ENCODE measurements at regions of chr3 and their contacts with region 1.

Region 1: GRCh38 chr3:10192953-10193691 is 28.4 kb downstream of the IRAK2 start:
- DNase-seq: peak; percentile 16 to 79 (median 62)
- ATAC-seq: peak; percentile 32
- H3K4me3 ChIP-seq: peak overlapping the region in 1 of 2 experiments; percentile 40
- H3K4me3 Mint-ChIP-seq: peak overlapping the region; percentile 80
- H3K27ac ChIP-seq: peak overlapping the region in 1 of 2 experiments; percentile 92
- H3K27ac Mint-ChIP-seq: peak overlapping the region; percentile 99
- H3K4me1 ChIP-seq: peaks cover 83% of the 10 kb centered on the region
- H3K4me1 Mint-ChIP-seq: peaks cover 79% of the 10 kb centered on the region
- H3K27me3 ChIP-seq: no peaks in the 10 kb centered on the region
- H3K27me3 Mint-ChIP-seq: no peaks in the 10 kb centered on the region
- CTCF ChIP-seq: no peak

Region 2: GRCh38 chr3:9396700-9397521 is 796.2 kb before region 1 on chr3:
- CTCF ChIA-PET with region 1: no interaction called
- POLR2A ChIA-PET with region 1: no interaction called
- intact Hi-C with region 1: no loop called
- DNase-seq: peak; percentile 98 to 100 (median 99)
- ATAC-seq: peak; percentile 67
- H3K4me3 ChIP-seq: peak overlapping the region; percentile 68 to 73
- H3K4me3 Mint-ChIP-seq: peak overlapping the region; percentile 94
- H3K27ac ChIP-seq: peak overlapping the region; percentile 90 to 97
- H3K27ac Mint-ChIP-seq: peak overlapping the region; percentile 97
- H3K4me1 ChIP-seq: peaks cover 69% of the 10 kb centered on the region
- H3K4me1 Mint-ChIP-seq: peaks cover 72% of the 10 kb centered on the region
- H3K27me3 ChIP-seq: no peaks in the 10 kb centered on the region
- H3K27me3 Mint-ChIP-seq: no peaks in the 10 kb centered on the region
- CTCF ChIP-seq: no peak

Region 3: DNA sequence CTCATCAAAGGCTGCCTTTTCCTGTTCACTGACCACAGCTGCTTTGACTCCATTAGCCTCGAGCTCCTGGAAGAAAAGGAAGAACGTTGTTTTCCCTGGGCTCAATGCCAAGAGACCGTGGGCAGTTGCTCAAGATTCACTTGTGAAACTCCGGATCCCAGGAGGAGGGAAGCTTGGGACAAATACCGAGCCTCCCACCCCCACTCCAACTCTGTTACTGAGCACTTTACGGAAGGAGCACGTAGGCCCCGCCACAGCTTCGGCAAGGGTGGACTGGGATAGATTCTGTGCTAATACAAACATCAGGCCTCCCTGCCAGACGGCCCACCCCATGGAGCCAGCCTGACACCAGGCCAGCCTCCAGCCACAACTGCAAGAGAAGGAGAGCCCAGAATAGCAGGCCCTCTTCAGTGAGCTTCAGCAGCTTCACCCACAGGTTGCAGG is 177.6 kb before region 1 on chr3:
- CTCF ChIA-PET with region 1: no interaction called
- POLR2A ChIA-PET with region 1: no interaction called
- intact Hi-C with region 1: no loop called
- DNase-seq: no peak
- ATAC-seq: no peak
- H3K4me3 ChIP-seq: no peak overlapping the region
- H3K4me3 Mint-ChIP-seq: no peak overlapping the region
- H3K27ac ChIP-seq: no peak overlapping the region
- H3K27ac Mint-ChIP-seq: no peak overlapping the region
- H3K4me1 ChIP-seq: peaks cover 10% of the 10 kb centered on the region
- H3K4me1 Mint-ChIP-seq: peaks cover 4% of the 10 kb centered on the region
- H3K27me3 ChIP-seq: no peaks in the 10 kb centered on the region
- H3K27me3 Mint-ChIP-seq: peaks cover 5% of the 10 kb centered on the region
- CTCF ChIP-seq: no peak

Region 4: GRCh38 chr3:10142707-10143566 is 50.2 kb before region 1 on chr3:
- CTCF ChIA-PET with region 1: interaction called, 4 read pairs
- POLR2A ChIA-PET with region 1: interaction called, 11 read pairs
- intact Hi-C with region 1: loop called in 1 of 2 experiments (anchors 2 kb)
- DNase-seq: peak in 3 of 9 experiments; percentile 22 to 51 (median 33)
- ATAC-seq: no peak
- H3K4me3 ChIP-seq: peak overlapping the region; percentile 73 to 74
- H3K4me3 Mint-ChIP-seq: peak overlapping the region; percentile 93
- H3K27ac ChIP-seq: peak overlapping the region in 1 of 2 experiments; percentile 54
- H3K27ac Mint-ChIP-seq: peak overlapping the region; percentile 98
- H3K4me1 ChIP-seq: peaks cover 32% of the 10 kb centered on the region
- H3K4me1 Mint-ChIP-seq: peaks cover 32% of the 10 kb centered on the region
- H3K27me3 ChIP-seq: no peaks in the 10 kb centered on the region
- H3K27me3 Mint-ChIP-seq: no peaks in the 10 kb centered on the region
- CTCF ChIP-seq: no peak

Region 5: DNA sequence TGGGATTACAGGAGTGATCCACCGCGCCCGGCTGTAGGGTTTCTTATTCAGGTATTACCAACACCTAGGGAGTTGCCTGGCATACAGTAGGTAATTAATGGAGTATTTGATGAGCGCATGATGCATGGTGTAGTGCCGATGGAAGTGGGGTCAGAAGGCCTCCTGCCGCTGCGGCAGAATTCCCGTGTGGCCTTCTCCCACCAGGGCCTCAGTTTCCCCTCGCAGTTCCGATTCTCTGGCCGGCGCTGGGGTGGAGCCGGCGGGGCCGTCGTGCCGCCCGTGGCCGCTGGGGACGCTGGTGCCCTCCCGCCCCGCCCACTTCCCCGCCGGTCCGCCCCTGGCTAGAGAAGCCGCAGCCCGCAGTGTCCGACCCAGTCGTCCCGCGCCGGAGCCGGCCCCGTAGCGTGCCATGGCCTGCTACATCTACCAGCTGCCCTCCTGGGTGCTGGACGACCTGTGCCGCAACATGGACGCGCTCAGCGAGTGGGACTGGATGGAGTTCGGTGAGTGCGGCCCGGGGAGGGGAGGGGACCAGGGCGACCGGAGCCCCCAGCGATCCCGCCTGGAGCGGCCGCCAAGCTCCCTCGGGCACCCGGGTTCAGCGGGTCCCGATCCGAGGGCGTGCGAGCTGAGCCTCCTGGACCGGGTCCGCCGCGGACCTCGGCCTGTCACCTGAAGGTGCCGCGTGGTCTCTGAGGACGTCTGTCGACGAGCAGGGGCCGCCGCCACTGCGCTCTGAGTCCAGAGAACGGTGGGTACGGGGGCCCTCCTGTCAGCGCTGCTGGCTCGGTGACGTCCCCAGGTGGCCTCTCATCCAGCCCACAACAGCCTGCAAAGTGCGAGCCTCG is 28.4 kb before region 1 on chr3 and contains the start of gene IRAK2:
- CTCF ChIA-PET with region 1: interaction called, 12 read pairs
- POLR2A ChIA-PET with region 1: interaction called, 7 read pairs
- intact Hi-C with region 1: loop called (anchors 1 to 2 kb)
- DNase-seq: peak; percentile 18 to 77 (median 52)
- ATAC-seq: peak; percentile 87
- H3K4me3 ChIP-seq: peak within 1 kb of the TSS; percentile 90 to 91
- H3K4me3 Mint-ChIP-seq: peak within 1 kb of the TSS; percentile 82
- H3K27ac ChIP-seq: peak within 1 kb of the TSS; percentile 48 to 59
- H3K27ac Mint-ChIP-seq: peak within 1 kb of the TSS; percentile 52
- H3K4me1 ChIP-seq: peaks cover 16% of the 10 kb centered on the region
- H3K4me1 Mint-ChIP-seq: peaks cover 19% of the 10 kb centered on the region
- H3K27me3 ChIP-seq: no peaks in the 10 kb centered on the region
- H3K27me3 Mint-ChIP-seq: no peaks in the 10 kb centered on the region
- CTCF ChIP-seq: peak; percentile 97
- total RNA-seq, gene IRAK2: 1.6 to 1.7 TPM

Region 6: DNA sequence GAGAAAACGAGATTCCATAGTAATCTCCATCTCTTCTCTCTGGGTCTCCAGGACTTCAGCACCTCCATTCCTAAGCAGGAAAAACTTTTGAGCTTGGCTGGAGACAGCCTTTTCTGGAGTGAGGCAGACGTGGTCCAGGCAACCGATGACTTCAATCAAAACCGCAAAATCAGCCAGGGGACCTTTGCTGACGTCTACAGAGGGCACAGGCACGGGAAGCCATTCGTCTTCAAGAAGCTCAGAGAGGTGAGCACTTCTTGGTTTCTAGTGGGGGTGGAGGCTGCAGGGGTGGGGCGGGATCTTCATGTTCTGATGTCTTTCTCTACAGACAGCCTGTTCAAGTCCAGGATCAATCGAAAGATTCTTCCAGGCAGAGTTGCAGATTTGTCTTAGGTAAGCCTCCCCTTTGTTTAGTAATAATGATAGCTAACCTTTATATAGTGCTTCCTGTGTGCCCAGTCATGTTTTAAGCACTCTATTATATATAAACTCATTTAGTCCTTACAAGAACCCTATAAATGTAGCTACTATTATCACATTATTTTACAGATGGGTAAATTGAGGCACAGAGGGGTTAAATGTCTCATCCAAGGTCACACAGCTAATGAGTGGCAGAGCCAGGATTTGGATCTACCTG is 20.2 kb after region 1 on chr3:
- CTCF ChIA-PET with region 1: interaction called, 7 read pairs
- POLR2A ChIA-PET with region 1: interaction called, 5 read pairs
- intact Hi-C with region 1: loop called in 1 of 2 experiments (anchors 2 kb)
- DNase-seq: no peak
- ATAC-seq: no peak
- H3K4me3 ChIP-seq: no peak overlapping the region
- H3K4me3 Mint-ChIP-seq: no peak overlapping the region
- H3K27ac ChIP-seq: no peak overlapping the region
- H3K27ac Mint-ChIP-seq: no peak overlapping the region
- H3K4me1 ChIP-seq: no peaks in the 10 kb centered on the region
- H3K4me1 Mint-ChIP-seq: no peaks in the 10 kb centered on the region
- H3K27me3 ChIP-seq: no peaks in the 10 kb centered on the region
- H3K27me3 Mint-ChIP-seq: no peaks in the 10 kb centered on the region
- CTCF ChIP-seq: no peak

Region 7: GRCh38 chr3:10224784-10225665 is 31.9 kb after region 1 on chr3:
- CTCF ChIA-PET with region 1: interaction called, 15 read pairs
- POLR2A ChIA-PET with region 1: interaction called, 18 read pairs
- intact Hi-C with region 1: loop called (anchors 1 to 5 kb)
- DNase-seq: peak; percentile 34 to 81 (median 65)
- ATAC-seq: peak; percentile 70
- H3K4me3 ChIP-seq: no peak overlapping the region
- H3K4me3 Mint-ChIP-seq: peak overlapping the region; percentile 7
- H3K27ac ChIP-seq: peak overlapping the region in 1 of 2 experiments; percentile 30
- H3K27ac Mint-ChIP-seq: peak overlapping the region; percentile 75
- H3K4me1 ChIP-seq: peaks cover 24% of the 10 kb centered on the region
- H3K4me1 Mint-ChIP-seq: peaks cover 51% of the 10 kb centered on the region
- H3K27me3 ChIP-seq: no peaks in the 10 kb centered on the region
- H3K27me3 Mint-ChIP-seq: no peaks in the 10 kb centered on the region
- CTCF ChIP-seq: peak; percentile 86

Region 8: GRCh38 chr3:10242182-10243065 is 49.3 kb after region 1 on chr3:
- CTCF ChIA-PET with region 1: interaction called, 4 read pairs
- POLR2A ChIA-PET with region 1: interaction called, 16 read pairs
- intact Hi-C with region 1: loop called in 1 of 2 experiments (anchors 1 kb)
- DNase-seq: peak; percentile 24 to 91 (median 75)
- ATAC-seq: peak; percentile 91
- H3K4me3 ChIP-seq: peak overlapping the region in 1 of 2 experiments; percentile 11
- H3K4me3 Mint-ChIP-seq: peak overlapping the region; percentile 73
- H3K27ac ChIP-seq: peak overlapping the region; percentile 33 to 70
- H3K27ac Mint-ChIP-seq: peak overlapping the region; percentile 90
- H3K4me1 ChIP-seq: peaks cover 39% of the 10 kb centered on the region
- H3K4me1 Mint-ChIP-seq: peaks cover 52% of the 10 kb centered on the region
- H3K27me3 ChIP-seq: no peaks in the 10 kb centered on the region
- H3K27me3 Mint-ChIP-seq: no peaks in the 10 kb centered on the region
- CTCF ChIP-seq: no peak

Region 9: DNA sequence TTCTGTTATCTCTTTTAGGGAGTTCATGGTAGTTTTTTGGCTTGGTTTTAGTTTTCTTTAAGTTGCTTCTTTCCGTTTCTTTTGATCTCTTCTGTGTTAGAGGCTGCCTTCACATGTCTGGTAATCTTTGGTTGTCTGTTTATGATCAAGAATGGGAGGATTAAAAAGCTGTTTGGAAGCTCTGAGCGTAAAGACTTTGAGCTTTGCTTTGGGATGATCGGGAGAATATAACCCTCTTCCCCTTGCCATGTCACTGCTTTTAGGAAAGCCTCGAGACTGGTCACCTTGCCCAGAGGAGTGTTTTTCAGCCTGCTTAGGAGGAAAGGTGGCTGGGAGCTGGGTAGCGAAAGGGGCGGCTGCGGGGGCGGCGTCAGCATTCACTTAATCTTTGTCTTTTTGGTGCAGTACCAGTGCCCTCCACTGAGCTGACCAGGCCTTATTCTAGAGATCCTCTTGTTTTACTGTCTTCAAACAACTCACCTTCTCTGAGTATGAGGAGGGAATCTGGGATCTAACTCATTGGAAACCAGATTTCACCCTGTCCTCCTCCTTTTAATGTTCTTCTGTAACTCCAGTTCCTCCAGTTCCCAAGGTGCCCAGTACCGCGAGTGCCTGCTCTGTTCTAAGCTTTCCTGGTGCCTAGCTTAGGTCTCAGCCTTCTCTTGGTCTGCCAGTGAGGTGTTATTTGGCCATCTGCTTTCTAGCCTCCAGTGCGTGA is 70.7 kb after region 1 on chr3:
- CTCF ChIA-PET with region 1: interaction called, 10 read pairs
- POLR2A ChIA-PET with region 1: interaction called, 5 read pairs
- intact Hi-C with region 1: no loop called
- DNase-seq: peak; percentile 36 to 80 (median 72)
- ATAC-seq: peak; percentile 98
- H3K4me3 ChIP-seq: peak overlapping the region; percentile 19 to 38
- H3K4me3 Mint-ChIP-seq: peak overlapping the region; percentile 68
- H3K27ac ChIP-seq: peak overlapping the region; percentile 20 to 73
- H3K27ac Mint-ChIP-seq: peak overlapping the region; percentile 86
- H3K4me1 ChIP-seq: peaks cover 61% of the 10 kb centered on the region
- H3K4me1 Mint-ChIP-seq: peaks cover 78% of the 10 kb centered on the region
- H3K27me3 ChIP-seq: no peaks in the 10 kb centered on the region
- H3K27me3 Mint-ChIP-seq: no peaks in the 10 kb centered on the region
- CTCF ChIP-seq: peak; percentile 56

Measured in CD8-positive, alpha-beta T cell (primary cell).